ENCODE measurements at regions of chr1 and their contacts with region 1.

Region 1: DNA sequence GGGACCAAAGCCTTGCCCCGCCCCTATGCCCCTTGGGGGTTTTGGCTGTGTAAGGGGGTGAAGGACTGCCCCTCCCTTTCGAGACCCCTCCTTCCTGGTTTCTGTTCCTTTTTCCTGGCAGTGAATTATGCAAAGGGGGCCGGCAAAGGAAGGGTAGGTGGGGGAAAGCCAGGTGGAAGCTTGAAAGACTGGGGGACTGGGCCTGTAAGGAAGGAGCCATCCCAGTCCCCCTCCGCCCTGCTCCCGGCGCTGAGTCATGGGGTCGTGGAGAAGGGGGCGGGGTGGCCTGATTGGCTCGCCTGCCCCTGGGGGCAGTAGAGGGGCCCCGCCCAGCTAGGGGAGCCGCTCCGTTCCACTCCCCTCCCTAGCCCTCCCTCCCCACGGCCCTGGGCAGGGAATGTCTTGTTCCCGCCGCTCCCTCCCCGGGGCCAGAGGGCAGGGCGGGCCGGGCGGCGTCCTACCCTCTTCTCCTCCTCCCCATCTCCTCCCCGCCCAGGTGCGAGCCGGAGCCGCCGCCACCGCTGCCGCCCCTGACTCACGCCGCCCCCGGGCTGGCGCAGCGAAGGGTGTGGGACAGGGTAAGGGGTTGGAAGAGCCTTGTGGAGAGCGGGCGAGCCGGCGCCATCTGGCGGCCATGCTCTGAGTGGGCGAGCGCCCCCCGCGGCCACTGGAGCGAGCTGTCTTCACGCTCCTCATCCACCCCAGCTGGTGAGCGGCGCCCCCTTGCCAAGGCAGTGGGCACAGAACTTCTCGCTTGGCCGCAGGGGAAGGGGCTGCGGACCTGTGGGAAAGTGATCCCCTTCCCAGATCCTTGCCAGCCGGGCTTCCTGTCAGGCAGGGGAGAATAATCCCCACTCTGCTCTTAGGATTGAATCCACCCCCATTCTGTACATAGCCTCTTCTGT is 14.7 kb downstream of the ZBTB7B start:
- DNase-seq: peak; percentile 84 to 98
- ATAC-seq: peak; percentile 83 to 90
- H3K4me3 ChIP-seq: peak overlapping the region; percentile 29
- H3K27ac ChIP-seq: peak overlapping the region; percentile 96 to 99
- H3K4me1 ChIP-seq: peaks cover 74% of the 10 kb centered on the region
- CTCF ChIP-seq: peak; percentile 100
- EP300 ChIP-seq: peak in 1 of 2 experiments; percentile 30; a peak in 1 of 5 replicates
- POLR2A ChIP-seq: no peak
- RAD21 ChIP-seq: peak; percentile 85 to 97

Region 2: GRCh38 chr1:154839691-154840090 is 177.6 kb before region 1 on chr1:
- CTCF ChIA-PET with region 1: no interaction called
- POLR2A ChIA-PET with region 1: interaction called, 11 read pairs
- DNase-seq: no peak
- ATAC-seq: no peak
- H3K4me3 ChIP-seq: no peak overlapping the region
- H3K27ac ChIP-seq: no peak overlapping the region
- H3K4me1 ChIP-seq: no peaks in the 10 kb centered on the region
- CTCF ChIP-seq: no peak
- EP300 ChIP-seq: no peak
- POLR2A ChIP-seq: no peak
- RAD21 ChIP-seq: no peak

Region 3: DNA sequence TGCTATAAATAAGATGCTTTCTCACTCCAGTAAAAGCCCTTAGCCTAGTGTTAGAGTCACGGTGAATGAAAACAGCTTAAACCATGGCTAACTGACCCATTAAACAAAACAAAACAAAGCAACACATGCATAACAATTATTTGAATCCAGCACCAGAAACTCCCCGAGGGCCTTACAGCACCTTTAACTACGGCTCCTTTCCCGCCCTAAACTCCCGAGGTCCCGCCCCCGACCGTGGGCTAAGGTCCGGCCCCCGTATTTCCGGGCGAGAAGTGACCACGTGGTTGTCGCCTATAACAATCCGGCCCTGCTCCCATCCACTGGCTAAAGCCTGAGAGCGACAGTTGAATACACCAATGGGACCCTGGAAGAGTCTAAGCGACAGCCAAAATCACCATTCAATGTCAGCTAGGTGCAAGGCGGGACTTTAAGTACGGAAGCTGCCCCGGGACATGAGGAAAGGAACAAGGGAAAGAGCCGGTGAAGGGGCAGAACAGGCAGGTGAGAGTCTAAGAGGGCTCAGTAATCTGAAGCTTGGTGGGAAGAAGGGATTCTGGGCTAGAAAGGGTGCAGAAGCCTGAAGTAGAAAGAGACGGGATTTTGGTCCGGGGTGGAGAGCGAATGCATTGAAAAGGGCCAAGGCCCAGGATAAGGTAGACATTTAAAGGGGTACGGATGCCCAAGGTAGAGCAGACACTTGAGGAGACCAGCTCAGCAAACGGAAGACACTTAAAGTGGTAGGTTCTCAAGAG is 34.2 kb before region 1 on chr1 and contains the start of gene FLAD1:
- CTCF ChIA-PET with region 1: no interaction called
- POLR2A ChIA-PET with region 1: no interaction called
- DNase-seq: peak; percentile 100
- ATAC-seq: peak; percentile 99 to 100
- H3K4me3 ChIP-seq: peak within 1 kb of the TSS; percentile 81
- H3K27ac ChIP-seq: peak within 1 kb of the TSS; percentile 83 to 86
- H3K4me1 ChIP-seq: peaks cover 22% of the 10 kb centered on the region
- CTCF ChIP-seq: no peak
- EP300 ChIP-seq: no peak
- POLR2A ChIP-seq: peak; percentile 41; the same call in 1 of the 2 replicates
- RAD21 ChIP-seq: no peak
- polyA plus RNA-seq, gene FLAD1: 43.5 and 57.1 TPM in 2 replicates

Region 4: GRCh38 chr1:155001675-155002463 is 15.4 kb before region 1 on chr1:
- CTCF ChIA-PET with region 1: no interaction called
- POLR2A ChIA-PET with region 1: interaction called, 14 read pairs
- DNase-seq: peak; percentile 96 to 100
- ATAC-seq: peak; percentile 51 to 73
- H3K4me3 ChIP-seq: peak overlapping the region; percentile 80
- H3K27ac ChIP-seq: peak overlapping the region; percentile 98 to 100
- H3K4me1 ChIP-seq: peaks cover 43% of the 10 kb centered on the region
- CTCF ChIP-seq: peak; percentile 46
- EP300 ChIP-seq: no peak
- POLR2A ChIP-seq: no peak; the same call in 1 of the 2 replicates
- RAD21 ChIP-seq: peak; percentile 37 to 62

Region 5: DNA sequence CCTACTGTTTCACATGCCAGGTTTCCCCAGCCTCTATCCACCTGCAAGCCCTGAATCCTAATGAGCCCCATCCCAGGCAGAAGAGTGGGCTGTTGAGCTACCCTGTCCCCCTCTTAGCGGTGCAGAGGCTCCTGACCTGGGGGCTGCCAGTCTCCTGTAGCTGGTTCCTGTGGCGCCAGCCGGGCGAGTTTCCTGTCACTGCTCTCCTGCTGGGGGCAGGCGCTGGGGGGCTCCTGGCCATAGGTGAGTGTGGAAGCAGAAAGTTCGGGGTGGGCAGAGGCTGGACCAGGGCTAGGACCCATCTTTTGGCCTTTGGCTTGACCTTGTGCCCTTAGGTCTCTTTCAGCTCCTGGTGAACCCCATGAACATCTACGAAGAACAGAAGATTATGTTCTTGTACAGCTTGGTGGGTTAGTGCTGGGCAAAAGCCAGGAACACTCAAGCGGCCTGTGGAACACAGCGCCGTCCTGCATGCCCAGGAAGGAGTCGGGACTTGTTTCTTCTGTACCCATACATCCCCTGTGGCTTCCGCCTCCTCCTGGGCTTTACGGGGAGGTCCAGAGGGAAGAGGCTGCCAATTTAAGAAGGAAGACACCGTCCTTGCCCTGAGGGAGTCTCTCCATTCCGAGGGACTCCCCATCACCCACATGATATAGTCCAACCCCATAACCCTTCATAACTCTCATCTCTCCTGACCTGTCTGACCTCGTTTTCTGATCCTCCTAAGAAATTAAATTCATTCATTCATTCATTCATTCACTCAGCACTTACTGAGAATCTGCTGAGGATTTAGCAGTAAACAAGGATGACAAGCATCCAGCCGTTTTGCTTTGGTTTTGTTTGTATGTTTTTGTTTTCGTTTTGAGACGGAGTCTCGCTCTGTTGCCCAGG is 17.3 kb after region 1 on chr1:
- CTCF ChIA-PET with region 1: no interaction called
- POLR2A ChIA-PET with region 1: no interaction called
- DNase-seq: no peak
- ATAC-seq: no peak
- H3K4me3 ChIP-seq: no peak overlapping the region
- H3K27ac ChIP-seq: no peak overlapping the region; a peak in 1 of 6 replicates
- H3K4me1 ChIP-seq: peaks cover 19% of the 10 kb centered on the region
- CTCF ChIP-seq: no peak
- EP300 ChIP-seq: no peak
- POLR2A ChIP-seq: no peak
- RAD21 ChIP-seq: no peak

Region 6: DNA sequence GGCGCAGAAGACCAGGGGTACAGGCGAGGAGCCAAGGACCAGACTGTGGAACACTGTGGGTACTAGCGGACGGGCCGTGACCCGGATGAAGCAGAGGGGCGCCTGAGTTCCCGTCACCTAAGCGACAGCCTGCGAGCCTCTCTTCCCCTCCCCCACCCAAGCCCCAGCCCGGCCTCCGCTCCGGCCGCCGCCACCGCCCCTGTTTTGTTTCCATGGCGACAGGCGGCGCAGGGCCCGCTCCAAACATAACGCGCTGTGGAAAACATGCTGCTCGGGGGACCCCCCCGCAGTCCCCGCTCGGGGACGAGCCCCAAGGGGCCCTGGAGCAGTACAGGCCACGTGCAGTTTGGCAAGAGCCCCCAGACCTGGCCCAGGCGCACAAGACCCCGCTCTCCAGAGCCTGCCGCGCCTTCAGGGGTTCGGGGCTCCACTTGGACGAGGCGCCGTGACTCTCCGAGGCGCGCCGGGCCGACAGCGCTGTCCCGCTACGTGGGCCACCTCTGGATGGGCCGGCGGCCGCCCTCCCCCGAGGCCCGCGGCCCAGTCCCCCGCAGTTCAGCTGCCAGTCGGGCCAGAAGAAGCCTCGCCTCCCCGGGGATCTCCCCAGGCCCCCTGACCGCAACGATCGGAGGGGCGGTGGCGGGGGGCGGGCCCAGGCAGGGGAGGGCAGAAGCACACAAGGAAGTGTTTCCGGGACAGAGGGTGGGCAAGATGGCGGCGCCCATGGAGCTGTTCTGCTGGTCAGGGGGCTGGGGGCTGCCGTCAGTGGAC is 191.4 kb after region 1 on chr1 and contains the start of gene MTX1:
- CTCF ChIA-PET with region 1: no interaction called
- POLR2A ChIA-PET with region 1: no interaction called
- DNase-seq: peak; percentile 76 to 84
- ATAC-seq: peak; percentile 75 to 87
- H3K4me3 ChIP-seq: peak within 1 kb of the TSS; percentile 90
- H3K27ac ChIP-seq: peak within 1 kb of the TSS; percentile 97 to 99
- H3K4me1 ChIP-seq: peaks cover 23% of the 10 kb centered on the region
- CTCF ChIP-seq: no peak
- EP300 ChIP-seq: no peak; a peak in 1 of 5 replicates
- POLR2A ChIP-seq: peak; percentile 52
- RAD21 ChIP-seq: no peak
- polyA plus RNA-seq, gene MTX1: 53.4 and 73.9 TPM in 2 replicates

Measured in A549 (cell line).